Mammary epithelial cell (primary cell): ENCODE measurements at regions of chr6 and their contacts with region 1.

Region 1: DNA sequence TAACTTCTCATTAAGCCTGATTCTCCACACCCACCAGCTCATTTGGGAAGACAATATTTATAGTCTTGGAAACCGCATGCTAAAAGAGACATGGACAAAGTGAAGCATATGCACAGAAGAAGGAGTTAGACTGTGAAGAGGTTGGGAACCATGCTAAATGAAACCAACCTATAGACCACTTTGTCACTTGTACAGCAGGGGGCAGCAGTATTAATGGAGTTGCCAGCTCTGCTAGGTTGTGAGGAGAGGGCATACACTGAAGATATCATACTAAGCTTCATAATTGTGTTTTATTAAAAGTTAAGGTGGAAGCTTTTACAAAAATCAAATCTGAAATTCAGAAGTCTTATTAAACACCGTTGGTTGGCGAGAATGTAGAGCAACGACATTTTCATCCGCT is 38.3 kb upstream of the HMGCLL1 start:
- DNase-seq: peak; percentile 44
- H3K4me3 ChIP-seq: no peak overlapping the region
- H3K27ac ChIP-seq: no peak overlapping the region
- H3K4me1 ChIP-seq: no peaks in the 10 kb centered on the region
- H3K27me3 ChIP-seq: no peaks in the 10 kb centered on the region
- CTCF ChIP-seq: peak; percentile 67 to 69

Region 2: DNA sequence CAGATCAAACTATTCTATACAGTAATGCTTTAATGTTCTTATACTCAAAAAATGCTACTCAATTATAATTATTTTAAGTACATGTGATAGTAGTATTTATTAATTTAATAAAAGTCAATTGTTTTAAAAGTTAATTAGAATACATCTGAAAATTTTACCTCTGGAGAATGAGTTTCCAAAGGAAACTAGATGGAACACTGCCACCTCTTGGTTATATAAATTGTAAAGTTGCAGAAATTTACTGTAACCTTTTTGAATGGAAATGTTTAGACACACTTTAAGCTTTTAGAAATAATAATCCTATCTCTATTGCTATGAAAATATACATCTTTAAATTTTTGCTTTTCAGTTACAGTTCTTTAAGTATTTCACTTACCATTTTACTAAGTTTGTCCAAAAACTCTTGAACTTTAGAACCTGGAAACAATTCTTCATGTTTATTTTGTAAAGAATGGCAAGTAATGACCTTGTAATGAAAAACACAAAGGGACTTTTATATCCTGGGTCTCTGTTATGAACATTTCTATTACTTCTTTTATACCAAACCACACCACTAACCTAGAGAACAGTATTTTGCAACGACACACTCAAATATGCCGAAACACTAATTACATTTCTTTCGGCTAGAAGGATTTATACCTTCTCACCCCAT is 269.0 kb after region 1 on chr6:
- CTCF ChIA-PET with region 1: interaction called, 3 read pairs
- dilution Hi-C with region 1: loop called (anchors 10 kb)
- in situ Hi-C with region 1: loop called (anchors 10 kb)
- intact Hi-C with region 1: loop called (anchors 1 kb)
- DNase-seq: no peak
- H3K4me3 ChIP-seq: no peak overlapping the region
- H3K27ac ChIP-seq: no peak overlapping the region
- H3K4me1 ChIP-seq: peaks cover 8% of the 10 kb centered on the region
- H3K27me3 ChIP-seq: no peaks in the 10 kb centered on the region
- CTCF ChIP-seq: peak; percentile 27 to 42

Region 3: GRCh38 chr6:55953335-55953734 is 336.1 kb after region 1 on chr6:
- CTCF ChIA-PET with region 1: interaction called, 3 read pairs
- dilution Hi-C with region 1: no loop called
- in situ Hi-C with region 1: no loop called
- intact Hi-C with region 1: loop called (anchors 1 kb)
- DNase-seq: peak; percentile 36
- H3K4me3 ChIP-seq: peak overlapping the region in 2 of 3 experiments; percentile 1 to 2
- H3K27ac ChIP-seq: no peak overlapping the region
- H3K4me1 ChIP-seq: no peaks in the 10 kb centered on the region
- H3K27me3 ChIP-seq: no peaks in the 10 kb centered on the region
- CTCF ChIP-seq: peak; percentile 43 to 56

Region 4: DNA sequence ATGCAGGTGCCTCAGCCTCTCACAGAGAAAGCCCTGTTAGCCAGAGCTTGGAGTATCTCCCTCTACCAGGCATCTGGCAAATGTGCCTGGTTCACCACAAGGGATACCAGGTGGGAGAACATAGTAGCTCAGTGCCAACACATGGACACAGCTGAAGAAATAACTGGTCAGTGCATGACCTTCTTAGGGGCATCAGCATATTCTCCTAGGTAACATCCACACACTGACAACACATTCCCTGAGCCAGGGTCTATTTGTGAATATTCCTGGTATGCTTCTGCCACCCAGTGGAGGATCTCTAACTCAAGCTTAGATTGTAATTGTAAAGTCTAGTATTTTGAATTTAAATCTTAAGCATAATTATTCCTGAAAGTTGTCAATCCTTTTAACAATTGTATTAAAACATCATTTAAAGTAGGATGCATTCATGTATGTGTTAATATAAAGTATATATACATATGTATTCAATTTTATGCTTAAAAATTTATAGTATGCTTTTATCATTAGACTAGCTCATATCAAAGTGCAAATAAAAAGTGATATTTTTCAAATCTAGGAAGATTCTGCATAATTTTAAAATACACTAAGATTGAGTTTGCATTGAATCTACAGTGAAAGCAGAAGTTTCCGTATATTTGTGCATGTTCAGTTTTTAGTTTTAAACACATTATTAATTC is 675.4 kb after region 1 on chr6:
- CTCF ChIA-PET with region 1: no interaction called
- dilution Hi-C with region 1: no loop called
- in situ Hi-C with region 1: no loop called
- intact Hi-C with region 1: loop called (anchors 10 kb)
- DNase-seq: peak; percentile 41
- H3K4me3 ChIP-seq: no peak overlapping the region
- H3K27ac ChIP-seq: no peak overlapping the region
- H3K4me1 ChIP-seq: peaks cover 5% of the 10 kb centered on the region
- H3K27me3 ChIP-seq: no peaks in the 10 kb centered on the region
- CTCF ChIP-seq: peak; percentile 51 to 69